BJ (cell line): ENCODE measurements at regions of chr13 and their contacts with region 1.

Region 1: DNA sequence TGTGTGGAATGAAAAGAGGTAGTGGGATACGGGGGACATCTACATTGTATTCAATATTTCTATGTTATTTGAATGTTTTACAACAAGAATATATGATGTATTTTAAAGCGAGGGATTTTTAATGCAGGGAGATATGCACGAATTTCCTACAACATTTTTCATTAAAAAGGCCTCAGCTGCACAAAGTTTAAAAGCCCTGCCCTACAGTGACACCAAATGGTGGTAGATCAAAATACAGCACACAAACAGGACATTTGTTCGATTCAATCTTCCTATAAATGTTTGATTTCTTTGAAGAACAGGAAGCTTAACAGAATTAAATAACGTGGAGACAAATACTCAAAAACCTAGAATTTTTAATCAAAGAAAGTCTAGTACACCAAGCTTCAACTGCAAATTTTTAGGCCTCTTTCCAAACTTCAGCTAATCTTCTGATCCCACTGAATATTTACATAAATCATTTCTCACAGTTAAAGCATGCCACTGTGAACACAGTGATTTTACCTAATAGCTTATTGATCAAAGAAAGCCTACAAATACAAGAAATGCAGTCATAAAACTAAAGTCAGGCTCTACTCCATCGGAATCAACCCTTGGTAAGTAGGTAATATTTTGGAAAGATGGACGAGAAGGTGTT is 257.2 kb downstream of the DIAPH3 start:
- DNase-seq: no peak
- H3K4me3 ChIP-seq: no peak overlapping the region
- H3K27me3 ChIP-seq: no peaks in the 10 kb centered on the region
- CTCF ChIP-seq: peak; percentile 76

Region 2: DNA sequence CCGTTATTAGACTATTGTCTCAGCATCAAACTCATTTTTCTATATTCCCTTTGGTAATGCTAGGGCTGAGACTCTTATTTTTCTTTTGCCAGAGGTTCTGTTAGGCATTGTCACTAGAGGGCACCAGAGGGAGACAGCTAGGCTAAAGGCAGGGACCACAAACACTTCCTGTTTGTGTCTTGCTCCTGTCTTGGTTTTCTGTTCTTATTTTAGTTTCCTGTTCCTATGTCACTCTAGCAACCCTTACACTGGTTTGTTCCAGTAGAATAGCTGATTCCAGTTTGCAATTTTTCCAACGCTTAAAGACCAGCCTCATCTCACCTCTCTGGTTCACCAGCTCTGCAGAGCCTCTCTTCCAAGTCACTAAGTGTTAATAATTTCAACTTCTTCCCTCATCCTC is 514.8 kb before region 1 on chr13:
- CTCF ChIA-PET with region 1: interaction called, 12 read pairs
- POLR2A ChIA-PET with region 1: no interaction called
- DNase-seq: no peak
- H3K4me3 ChIP-seq: no peak overlapping the region
- H3K27me3 ChIP-seq: no peaks in the 10 kb centered on the region
- CTCF ChIP-seq: peak; percentile 93

Region 3: DNA sequence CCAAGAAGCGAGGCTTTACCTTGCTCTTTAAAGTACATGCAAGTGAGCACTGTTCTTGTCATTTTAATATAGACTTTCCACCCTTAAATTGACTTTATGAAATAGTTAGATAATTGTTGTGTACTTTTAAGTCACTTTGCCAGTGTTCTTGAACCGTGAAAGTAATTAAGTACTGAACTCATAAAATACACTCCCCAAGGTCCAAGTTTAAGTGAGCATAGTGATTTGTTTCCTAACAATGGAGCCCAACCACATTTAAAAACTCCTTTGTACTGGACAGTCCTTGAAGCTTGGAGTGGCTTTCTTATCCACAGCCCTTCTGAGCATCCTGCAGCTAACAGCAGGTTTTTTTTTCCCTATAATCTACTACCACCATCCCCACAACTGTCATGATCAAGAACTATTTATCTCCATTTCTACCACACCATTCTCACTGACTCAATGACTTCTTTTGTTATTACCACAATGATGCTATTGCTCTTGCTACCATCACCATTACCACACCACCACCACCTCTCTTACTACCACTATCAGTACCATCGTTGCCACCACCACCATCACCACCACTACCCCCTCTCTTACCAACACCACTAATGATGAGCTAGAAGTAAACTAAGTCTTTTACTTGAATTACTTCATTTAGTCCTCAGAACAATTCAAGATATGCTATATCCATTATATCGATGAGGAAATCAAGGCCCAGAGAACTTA is 195.4 kb before region 1 on chr13:
- CTCF ChIA-PET with region 1: no interaction called
- POLR2A ChIA-PET with region 1: no interaction called
- DNase-seq: no peak
- H3K4me3 ChIP-seq: no peak overlapping the region
- H3K27me3 ChIP-seq: no peaks in the 10 kb centered on the region
- CTCF ChIP-seq: no peak

Region 4: GRCh38 chr13:59924256-59924655 is 17.7 kb after region 1 on chr13:
- CTCF ChIA-PET with region 1: no interaction called
- POLR2A ChIA-PET with region 1: no interaction called
- DNase-seq: no peak
- H3K4me3 ChIP-seq: no peak overlapping the region
- H3K27me3 ChIP-seq: no peaks in the 10 kb centered on the region
- CTCF ChIP-seq: no peak